HEK293 (cell line): ENCODE measurements at regions of chr10 and their contacts with region 1.

Region 1: DNA sequence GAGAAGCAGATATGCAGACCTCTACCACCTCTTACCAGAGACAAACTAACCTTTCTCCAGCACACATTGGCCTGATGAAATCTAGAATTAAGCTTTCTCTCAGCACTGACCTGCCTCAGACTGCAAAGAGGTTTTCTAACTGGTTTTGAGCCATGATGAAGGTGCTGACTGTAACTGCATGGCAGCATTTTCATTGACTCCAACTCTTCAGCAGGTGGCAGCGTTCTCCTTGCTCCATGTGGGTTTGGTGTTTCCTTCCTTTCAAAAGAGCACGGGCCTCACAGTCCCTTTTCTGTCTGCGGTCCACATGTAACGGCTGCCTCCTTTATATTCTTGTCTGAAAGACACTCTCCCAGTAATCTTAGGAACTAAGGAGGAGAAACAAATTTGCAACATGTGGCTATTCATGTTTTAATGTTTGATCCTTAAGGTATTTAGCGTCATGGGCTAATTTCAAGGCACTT is 12.6 kb downstream of the KLLN start:
- H3K4me3 ChIP-seq: no peak overlapping the region
- H3K27ac ChIP-seq: no peak overlapping the region
- H3K4me1 ChIP-seq: peaks cover 17% of the 10 kb centered on the region
- CTCF ChIP-seq: peak; percentile 59; the same call in 1 of the 2 replicates

Region 2: DNA sequence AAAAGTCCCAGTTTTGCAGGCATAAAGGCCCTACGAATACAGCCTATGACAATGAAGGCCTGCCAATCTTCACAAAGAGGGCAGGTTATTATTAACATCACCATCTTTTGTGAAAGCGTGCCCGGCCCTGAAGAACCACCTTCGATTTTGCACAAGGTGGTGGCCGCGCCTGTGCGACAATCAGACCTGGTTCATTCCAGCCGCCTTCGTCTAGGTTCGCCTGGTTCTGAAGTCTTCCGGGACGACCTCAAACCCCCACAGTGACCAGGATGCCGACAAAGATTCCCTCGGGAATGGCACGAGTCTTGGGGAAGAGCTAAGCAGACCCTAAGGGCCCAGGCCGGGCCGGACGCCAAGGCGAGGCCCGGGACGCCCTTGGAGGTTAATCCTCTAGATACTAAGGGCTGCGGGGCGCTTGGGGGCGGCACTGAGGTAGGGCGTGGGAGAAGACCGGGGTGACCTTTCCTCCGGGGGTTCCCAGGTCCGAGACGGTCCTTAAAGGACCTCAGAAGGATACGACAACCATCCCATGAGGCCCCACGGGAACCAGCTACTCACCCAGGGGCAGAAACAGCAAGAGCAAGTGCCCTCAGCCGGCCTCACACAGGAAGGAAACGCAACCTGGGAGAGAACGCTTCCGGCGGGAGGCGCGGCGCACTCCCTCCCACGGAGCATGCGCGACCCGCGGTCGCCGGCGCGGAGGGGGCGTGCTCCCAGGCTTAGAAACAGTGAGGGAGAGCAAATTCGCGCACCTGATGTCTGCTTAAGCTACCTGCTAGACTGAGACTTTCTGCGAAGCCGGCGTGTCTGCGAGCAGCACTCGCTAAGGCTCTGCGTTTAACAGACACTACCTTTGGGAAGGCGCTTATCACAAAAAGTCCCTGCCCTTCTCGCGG is 32.9 kb before region 1 on chr10 and contains the start of gene ATAD1:
- CTCF ChIA-PET with region 1: interaction called, 3 read pairs
- POLR2A ChIA-PET with region 1: interaction called, 24 read pairs
- H3K4me3 ChIP-seq: peak within 1 kb of the TSS; percentile 76
- H3K27ac ChIP-seq: peak within 1 kb of the TSS; percentile 99
- H3K4me1 ChIP-seq: peaks cover 13% of the 10 kb centered on the region; the same call in 1 of the 2 replicates
- CTCF ChIP-seq: peak; percentile 65